Activated CD4-positive, alpha-beta memory T cell treated with anti-CD3 and anti-CD28 coated beads for 36 hours (primary cell): ENCODE measurements at regions of chr10 and their contacts with region 1.

Region 1: GRCh38 chr10:88091490-88092105 is 228.2 kb downstream of the PTEN start:
- DNase-seq: peak; percentile 88
- H3K4me3 Mint-ChIP-seq: no peak overlapping the region
- H3K27ac Mint-ChIP-seq: peak overlapping the region; percentile 36
- H3K4me1 Mint-ChIP-seq: peaks cover 36% of the 10 kb centered on the region
- H3K27me3 Mint-ChIP-seq: peaks cover 17% of the 10 kb centered on the region

Region 2: GRCh38 chr10:87635610-87636312 is 455.8 kb before region 1 on chr10:
- CTCF ChIA-PET with region 1: no interaction called
- POLR2A ChIA-PET with region 1: no interaction called
- intact Hi-C with region 1: loop called (anchors 10 kb)
- DNase-seq: peak; percentile 76
- H3K4me3 Mint-ChIP-seq: no peak overlapping the region
- H3K27ac Mint-ChIP-seq: no peak overlapping the region
- H3K4me1 Mint-ChIP-seq: peaks cover 17% of the 10 kb centered on the region
- H3K27me3 Mint-ChIP-seq: no peaks in the 10 kb centered on the region

Region 3: GRCh38 chr10:88064608-88065382 is 26.8 kb before region 1 on chr10:
- CTCF ChIA-PET with region 1: interaction called, 13 read pairs
- POLR2A ChIA-PET with region 1: interaction called, 41 read pairs
- intact Hi-C with region 1: loop called (anchors 1 kb)
- DNase-seq: peak; percentile 51
- H3K4me3 Mint-ChIP-seq: no peak overlapping the region
- H3K27ac Mint-ChIP-seq: peak overlapping the region; percentile 9
- H3K4me1 Mint-ChIP-seq: peaks cover 49% of the 10 kb centered on the region
- H3K27me3 Mint-ChIP-seq: peaks cover 14% of the 10 kb centered on the region

Region 4: DNA sequence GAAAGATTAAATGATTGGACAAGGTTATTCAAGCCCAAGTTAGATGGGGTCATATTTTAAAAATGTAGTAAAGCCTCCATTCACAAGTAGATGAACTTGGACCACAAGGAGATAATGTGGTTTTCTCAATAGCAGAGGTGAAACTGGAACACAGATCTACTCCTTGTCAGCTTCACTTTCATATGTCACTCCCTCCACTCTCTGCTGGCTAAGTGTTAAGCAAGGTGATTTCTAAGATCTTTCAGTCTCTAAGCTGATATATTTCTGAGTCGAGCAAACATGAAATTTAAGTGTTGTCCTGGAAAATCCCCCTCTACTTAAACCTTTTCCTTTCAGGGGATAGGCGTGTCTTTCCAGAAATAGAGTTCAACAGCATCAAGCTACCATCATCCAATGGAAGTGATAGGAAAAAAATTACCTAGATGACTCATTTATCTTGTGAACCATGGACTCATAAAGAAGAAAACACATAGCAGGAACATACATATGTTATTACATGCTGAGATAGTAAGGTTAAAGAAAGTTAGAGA is 46.8 kb after region 1 on chr10:
- CTCF ChIA-PET with region 1: no interaction called
- POLR2A ChIA-PET with region 1: no interaction called
- intact Hi-C with region 1: loop called (anchors 1 kb)
- DNase-seq: no peak
- H3K4me3 Mint-ChIP-seq: no peak overlapping the region
- H3K27ac Mint-ChIP-seq: no peak overlapping the region
- H3K4me1 Mint-ChIP-seq: peaks cover 9% of the 10 kb centered on the region
- H3K27me3 Mint-ChIP-seq: no peaks in the 10 kb centered on the region

Region 5: GRCh38 chr10:88386821-88387773 is 295.5 kb after region 1 on chr10:
- CTCF ChIA-PET with region 1: interaction called, 14 read pairs
- POLR2A ChIA-PET with region 1: interaction called, 3 read pairs
- intact Hi-C with region 1: loop called (anchors 1 kb)
- DNase-seq: no peak
- H3K4me3 Mint-ChIP-seq: no peak overlapping the region
- H3K27ac Mint-ChIP-seq: peak overlapping the region; percentile 42
- H3K4me1 Mint-ChIP-seq: peaks cover 16% of the 10 kb centered on the region
- H3K27me3 Mint-ChIP-seq: no peaks in the 10 kb centered on the region

Region 6: GRCh38 chr10:88851706-88852105 is 760.1 kb after region 1 on chr10 and contains the start of gene ANKRD22:
- CTCF ChIA-PET with region 1: no interaction called
- POLR2A ChIA-PET with region 1: no interaction called
- intact Hi-C with region 1: loop called (anchors 2 kb)
- DNase-seq: no peak
- H3K4me3 Mint-ChIP-seq: no peak within 1 kb of the TSS
- H3K27ac Mint-ChIP-seq: no peak within 1 kb of the TSS
- H3K4me1 Mint-ChIP-seq: peaks cover 20% of the 10 kb centered on the region
- H3K27me3 Mint-ChIP-seq: peaks cover 6% of the 10 kb centered on the region
- total RNA-seq, gene ANKRD22: 0.12 to 0.24 TPM